H1 (cell line): ENCODE measurements at regions of chr17 and their contacts with region 1.

Region 1: GRCh38 chr17:38724337-38724988 is 5.7 kb upstream of the CISD3 start:
- DNase-seq: no peak
- H3K4me3 ChIP-seq: no peak overlapping the region
- H3K27ac ChIP-seq: no peak overlapping the region
- H3K4me1 ChIP-seq: peaks cover 3 to 10% (median 6%) of the 10 kb centered on the region in 4 experiments
- H3K27me3 ChIP-seq: peaks cover 0 to 26% (median 13%) of the 10 kb centered on the region in 4 experiments; a peak in 6 of 7 replicates
- CTCF ChIP-seq: no peak
- EP300 ChIP-seq: no peak
- POLR2A ChIP-seq: no peak
- RAD21 ChIP-seq: no peak

Region 2: DNA sequence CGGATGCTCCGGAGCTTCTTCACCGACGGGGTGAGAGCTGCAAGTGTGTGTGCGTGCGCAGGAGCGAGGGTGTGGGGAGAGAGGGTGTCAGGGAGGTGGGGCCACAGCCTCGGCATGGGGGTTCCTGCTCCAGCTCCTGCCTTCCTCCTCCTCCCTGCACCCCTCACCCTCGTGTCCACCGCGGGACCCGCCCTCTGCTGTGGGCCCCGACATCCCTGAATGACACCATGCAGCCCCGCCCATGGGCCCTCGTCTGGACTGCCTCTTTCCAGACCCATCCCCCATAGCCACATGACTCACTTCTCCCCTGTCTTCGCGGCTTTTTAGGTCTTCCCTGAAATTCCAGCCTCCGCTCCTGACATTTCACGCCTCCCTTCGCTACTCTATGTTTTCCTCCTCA is 254.6 kb before region 1 on chr17:
- CTCF ChIA-PET with region 1: no interaction called
- POLR2A ChIA-PET with region 1: no interaction called
- DNase-seq: no peak
- H3K4me3 ChIP-seq: no peak overlapping the region
- H3K27ac ChIP-seq: no peak overlapping the region
- H3K4me1 ChIP-seq: peaks cover 0 to 3% (median 0%) of the 10 kb centered on the region in 4 experiments; a peak in 1 of 7 replicates
- H3K27me3 ChIP-seq: no peaks in the 10 kb centered on the region
- CTCF ChIP-seq: no peak
- EP300 ChIP-seq: no peak
- POLR2A ChIP-seq: no peak
- RAD21 ChIP-seq: no peak

Region 3: GRCh38 chr17:38704645-38705522 is 19.6 kb before region 1 on chr17 and contains the start of gene MLLT6:
- CTCF ChIA-PET with region 1: interaction called, 15 read pairs
- POLR2A ChIA-PET with region 1: interaction called, 28 read pairs
- DNase-seq: no peak
- H3K4me3 ChIP-seq: peak within 1 kb of the TSS; percentile 46 to 76 (median 60)
- H3K27ac ChIP-seq: no peak within 1 kb of the TSS
- H3K4me1 ChIP-seq: peaks cover 15 to 48% (median 32%) of the 10 kb centered on the region in 4 experiments
- H3K27me3 ChIP-seq: peaks cover 31 to 80% (median 65%) of the 10 kb centered on the region in 4 experiments
- CTCF ChIP-seq: no peak
- EP300 ChIP-seq: no peak
- POLR2A ChIP-seq: no peak
- RAD21 ChIP-seq: no peak; a peak in 1 of 4 replicates
- total RNA-seq, gene MLLT6: 7.7 and 8.0 TPM in 2 replicates

Region 4: DNA sequence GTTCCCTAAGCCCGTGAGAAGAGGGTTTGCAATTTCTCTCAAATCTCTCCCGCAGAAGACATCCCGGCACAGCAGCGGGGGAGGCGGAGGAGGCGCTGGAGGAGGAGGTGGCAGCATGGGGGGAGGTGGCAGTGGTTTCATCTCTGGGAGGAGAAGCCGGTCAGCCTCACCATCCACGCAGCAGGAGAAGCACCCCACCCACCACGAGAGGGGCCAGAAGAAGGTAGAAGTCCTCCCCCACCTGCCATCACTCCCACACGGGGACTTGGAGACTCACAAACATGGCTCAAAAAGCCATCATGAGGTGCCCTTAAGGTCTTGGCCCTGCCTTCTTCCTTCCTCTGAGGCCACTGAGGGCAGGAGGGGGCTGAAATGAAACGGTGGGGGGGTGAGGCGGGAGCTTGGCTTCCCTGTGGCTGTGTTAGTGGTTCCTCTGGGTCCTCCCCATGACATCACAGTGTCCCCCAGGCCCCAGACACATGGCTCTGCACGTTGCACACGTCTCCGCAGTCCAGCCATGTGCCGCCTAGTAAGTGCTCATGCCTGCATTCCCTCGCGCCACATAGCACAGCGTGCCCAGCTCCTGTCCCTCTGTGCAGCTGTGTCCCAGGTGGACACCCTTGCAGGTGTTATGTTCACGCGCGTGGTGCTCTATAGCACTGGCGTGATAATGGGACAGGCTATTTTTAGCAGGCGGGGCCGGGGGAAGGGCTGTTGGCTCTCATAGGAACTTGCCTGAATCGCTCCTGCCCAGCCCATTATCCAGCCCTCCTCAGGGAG is 12.5 kb before region 1 on chr17:
- CTCF ChIA-PET with region 1: interaction called, 15 read pairs
- POLR2A ChIA-PET with region 1: interaction called, 28 read pairs
- DNase-seq: no peak
- H3K4me3 ChIP-seq: no peak overlapping the region
- H3K27ac ChIP-seq: no peak overlapping the region
- H3K4me1 ChIP-seq: peaks cover 9 to 36% (median 25%) of the 10 kb centered on the region in 4 experiments
- H3K27me3 ChIP-seq: peaks cover 1 to 26% (median 15%) of the 10 kb centered on the region in 4 experiments
- CTCF ChIP-seq: no peak
- EP300 ChIP-seq: no peak
- POLR2A ChIP-seq: no peak
- RAD21 ChIP-seq: no peak

Region 5: GRCh38 chr17:38752119-38752929 is 27.9 kb after region 1 on chr17 and contains the start of gene PSMB3:
- CTCF ChIA-PET with region 1: interaction called, 4 read pairs
- POLR2A ChIA-PET with region 1: interaction called, 40 read pairs
- DNase-seq: peak; percentile 88 to 96
- H3K4me3 ChIP-seq: peak within 1 kb of the TSS; percentile 86 to 99 (median 90)
- H3K27ac ChIP-seq: peak within 1 kb of the TSS; percentile 67; the same call in 1 of the 2 replicates
- H3K4me1 ChIP-seq: peaks cover 0 to 5% (median 3%) of the 10 kb centered on the region in 4 experiments; a peak in 4 of 7 replicates
- H3K27me3 ChIP-seq: peaks cover 0 to 11% (median 5%) of the 10 kb centered on the region in 4 experiments; a peak in 5 of 7 replicates
- CTCF ChIP-seq: 0 out of 4 replicates have a peak, but pooled peaks of 1 of the 3 experiments have one; percentile 3
- EP300 ChIP-seq: no peak
- POLR2A ChIP-seq: peak in 1 of 2 experiments; percentile 75; a peak in 1 of 3 replicates
- RAD21 ChIP-seq: no peak
- total RNA-seq, gene PSMB3: 291 and 301 TPM in 2 replicates

Region 6: GRCh38 chr17:38768417-38768816 is 44.0 kb after region 1 on chr17:
- CTCF ChIA-PET with region 1: no interaction called
- POLR2A ChIA-PET with region 1: no interaction called
- DNase-seq: no peak
- H3K4me3 ChIP-seq: no peak overlapping the region
- H3K27ac ChIP-seq: no peak overlapping the region
- H3K4me1 ChIP-seq: no peaks in the 10 kb centered on the region
- H3K27me3 ChIP-seq: no peaks in the 10 kb centered on the region
- CTCF ChIP-seq: no peak
- EP300 ChIP-seq: no peak
- POLR2A ChIP-seq: no peak
- RAD21 ChIP-seq: no peak